Prostate gland (tissue), 2 donors: ENCODE measurements at regions of chr14 and their contacts with region 1.

Region 1: DNA sequence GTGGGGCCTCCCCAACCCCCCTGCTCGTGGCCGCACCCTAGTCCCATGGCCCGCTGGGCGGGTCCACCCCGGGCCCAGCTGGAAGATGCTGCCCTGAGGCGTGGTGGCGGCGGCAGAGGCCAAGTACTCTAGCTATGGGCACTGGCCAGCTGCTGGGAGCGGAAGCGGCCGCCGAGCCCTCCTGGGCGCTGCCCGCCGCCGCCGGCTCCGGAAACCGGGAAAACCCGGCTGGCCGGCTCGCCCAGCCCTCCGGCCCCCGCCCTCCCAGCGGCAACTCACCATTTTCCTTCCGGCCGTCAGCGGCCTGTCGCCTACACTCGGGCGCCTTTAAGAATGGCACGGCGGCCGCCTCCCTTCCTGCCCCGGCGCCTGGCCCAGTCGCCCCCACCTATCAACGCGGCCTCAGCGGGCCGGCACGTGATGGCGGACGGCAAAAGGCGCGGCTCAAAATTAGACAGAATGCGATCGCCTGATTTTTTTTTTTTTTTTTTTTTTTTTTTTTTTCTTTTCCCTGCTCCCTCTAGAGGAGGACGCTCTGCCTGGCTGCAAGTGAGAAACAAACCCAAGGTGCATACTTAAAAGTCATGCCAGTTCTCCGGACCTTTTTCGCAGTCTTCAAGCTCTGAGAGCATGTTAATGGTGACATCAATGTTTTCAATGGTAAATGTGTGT is at the start of gene GMFB:
- DNase-seq: peak; percentile 90
- H3K4me3 ChIP-seq: peak within 1 kb of the TSS; percentile 58 to 78
- H3K27ac ChIP-seq: peak within 1 kb of the TSS; percentile 82 to 90
- H3K4me1 ChIP-seq: peaks cover 9% of the 10 kb centered on the region
- H3K27me3 ChIP-seq: no peaks in the 10 kb centered on the region
- CTCF ChIP-seq: peak in 3 of 4 experiments; percentile 25 to 46 (median 38)
- POLR2A ChIP-seq: peak; percentile 67
- total RNA-seq, gene GMFB: 19.2 to 37.1 TPM

Region 2: GRCh38 chr14:54366736-54367735 is 121.7 kb before region 1 on chr14:
- intact Hi-C with region 1: loop called (anchors 5 kb)
- DNase-seq: no peak
- H3K4me3 ChIP-seq: no peak overlapping the region
- H3K27ac ChIP-seq: no peak overlapping the region
- H3K4me1 ChIP-seq: no peaks in the 10 kb centered on the region
- H3K27me3 ChIP-seq: no peaks in the 10 kb centered on the region
- CTCF ChIP-seq: no peak
- POLR2A ChIP-seq: no peak

Region 3: DNA sequence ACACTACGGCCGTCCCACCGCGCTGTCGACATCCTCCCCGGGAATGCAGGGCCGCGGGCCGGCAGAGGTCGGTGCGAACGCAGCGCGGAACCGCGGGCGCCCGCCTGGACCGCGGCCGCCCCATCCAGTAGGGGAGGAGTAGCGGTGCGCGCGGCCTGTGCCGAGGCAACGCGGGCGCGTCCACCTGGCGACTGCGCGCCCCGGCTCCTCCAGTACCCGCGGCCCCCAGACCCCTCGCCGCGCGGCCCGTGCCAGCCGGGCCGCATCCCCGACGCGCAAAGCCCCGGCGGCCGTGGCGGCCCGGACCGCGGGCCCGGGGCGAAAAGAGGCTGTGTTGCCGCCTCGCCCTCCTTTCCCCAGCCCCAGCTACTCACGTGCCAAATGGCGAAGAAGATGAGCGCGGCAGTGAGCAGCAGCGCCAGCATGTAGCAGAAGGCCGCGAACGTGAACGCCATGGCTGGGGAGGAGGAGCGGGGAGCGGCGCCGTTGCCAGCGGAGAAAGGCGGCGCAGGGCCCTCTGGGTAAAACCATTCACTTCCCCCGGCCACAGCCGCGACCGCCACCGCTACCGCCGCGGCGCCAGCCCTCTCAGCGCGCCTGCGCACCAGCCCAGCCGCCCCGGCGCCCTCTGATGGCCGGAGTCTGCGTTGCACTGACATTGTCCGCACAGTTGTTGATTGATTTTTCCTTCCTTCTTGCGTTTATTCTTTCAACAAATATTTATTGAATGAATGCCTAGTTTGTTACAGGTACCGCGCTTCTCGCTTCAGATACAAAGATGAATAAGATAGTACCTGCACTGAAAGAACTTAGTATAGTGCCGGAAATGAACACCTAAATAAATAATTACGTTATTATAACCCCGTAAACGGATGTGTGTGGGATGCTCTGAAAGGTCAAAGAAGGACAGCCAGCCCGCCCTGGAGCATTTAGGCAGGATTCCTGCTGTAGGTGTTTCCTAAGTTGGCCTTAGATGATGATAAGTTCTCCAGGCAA is 47.6 kb before region 1 on chr14 and contains the start of gene CNIH1:
- intact Hi-C with region 1: loop called (anchors 2 kb)
- DNase-seq: peak; percentile 88
- H3K4me3 ChIP-seq: peak within 1 kb of the TSS; percentile 66 to 89
- H3K27ac ChIP-seq: peak within 1 kb of the TSS; percentile 87 to 91
- H3K4me1 ChIP-seq: peaks cover 3% of the 10 kb centered on the region
- H3K27me3 ChIP-seq: no peaks in the 10 kb centered on the region
- CTCF ChIP-seq: peak; percentile 69 to 98 (median 96)
- POLR2A ChIP-seq: peak; percentile 44
- total RNA-seq, gene CNIH1: 113 to 193 TPM

Region 4: DNA sequence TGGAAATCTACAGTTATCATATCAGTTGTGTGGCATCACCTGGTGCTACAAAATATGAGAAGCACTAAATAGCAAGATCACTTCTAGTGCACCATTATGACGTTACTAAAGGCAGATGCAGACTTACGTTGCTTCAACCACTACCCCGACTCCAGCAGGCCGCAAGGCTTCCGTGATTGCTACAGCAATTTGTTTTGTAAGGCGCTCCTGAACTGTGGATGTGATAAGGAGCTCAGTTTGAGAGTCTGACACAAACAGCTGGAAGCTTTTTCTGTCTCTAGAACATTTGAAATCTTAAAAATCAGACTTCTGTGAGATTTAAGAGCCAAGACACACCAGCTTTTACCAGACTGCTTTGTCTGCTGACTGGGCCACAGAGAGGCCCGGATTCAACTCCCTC is 356.9 kb after region 1 on chr14:
- intact Hi-C with region 1: no loop called
- DNase-seq: no peak
- H3K4me3 ChIP-seq: no peak overlapping the region
- H3K27ac ChIP-seq: no peak overlapping the region
- H3K4me1 ChIP-seq: no peaks in the 10 kb centered on the region
- H3K27me3 ChIP-seq: no peaks in the 10 kb centered on the region
- CTCF ChIP-seq: no peak
- POLR2A ChIP-seq: no peak